ENCODE measurements at regions of chr17 and their contacts with region 1.

Region 1: DNA sequence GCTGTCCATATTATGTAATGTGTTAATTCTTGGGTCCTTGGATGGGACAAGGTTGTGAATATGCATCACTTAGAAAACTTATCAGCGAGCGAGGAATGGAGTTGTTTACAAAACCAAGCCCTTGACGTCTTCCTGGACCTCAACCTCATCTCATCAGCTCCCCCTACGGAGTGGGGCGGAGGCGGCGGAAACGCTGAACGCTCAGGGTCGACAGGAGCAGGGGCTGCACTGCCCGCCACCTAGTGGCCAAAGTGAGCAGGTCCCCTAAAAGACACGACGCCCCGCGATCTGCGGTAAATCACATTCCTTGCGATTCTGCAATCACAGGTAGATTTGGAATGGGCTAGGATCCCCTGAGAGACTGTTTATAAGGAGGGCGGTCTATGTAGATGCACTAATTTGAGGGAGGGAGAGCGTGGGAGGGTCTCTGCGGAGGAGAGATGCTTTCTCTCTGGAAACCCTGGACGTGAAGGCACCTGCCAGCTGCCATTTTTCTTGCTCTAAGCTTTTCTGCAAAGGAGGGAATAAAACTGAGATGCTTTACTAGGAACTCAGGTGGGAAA is 5.4 kb upstream of the ICAM2 start:
- DNase-seq: peak; percentile 95 to 97 (median 97)
- H3K4me3 ChIP-seq: peak overlapping the region in 6 of 7 experiments; percentile 4 to 77 (median 46)
- H3K27ac ChIP-seq: peak overlapping the region; percentile 65 to 99
- H3K4me1 ChIP-seq: peaks cover 9 to 52% (median 44%) of the 10 kb centered on the region in 4 experiments
- H3K27me3 ChIP-seq: no peaks in the 10 kb centered on the region

Region 2: DNA sequence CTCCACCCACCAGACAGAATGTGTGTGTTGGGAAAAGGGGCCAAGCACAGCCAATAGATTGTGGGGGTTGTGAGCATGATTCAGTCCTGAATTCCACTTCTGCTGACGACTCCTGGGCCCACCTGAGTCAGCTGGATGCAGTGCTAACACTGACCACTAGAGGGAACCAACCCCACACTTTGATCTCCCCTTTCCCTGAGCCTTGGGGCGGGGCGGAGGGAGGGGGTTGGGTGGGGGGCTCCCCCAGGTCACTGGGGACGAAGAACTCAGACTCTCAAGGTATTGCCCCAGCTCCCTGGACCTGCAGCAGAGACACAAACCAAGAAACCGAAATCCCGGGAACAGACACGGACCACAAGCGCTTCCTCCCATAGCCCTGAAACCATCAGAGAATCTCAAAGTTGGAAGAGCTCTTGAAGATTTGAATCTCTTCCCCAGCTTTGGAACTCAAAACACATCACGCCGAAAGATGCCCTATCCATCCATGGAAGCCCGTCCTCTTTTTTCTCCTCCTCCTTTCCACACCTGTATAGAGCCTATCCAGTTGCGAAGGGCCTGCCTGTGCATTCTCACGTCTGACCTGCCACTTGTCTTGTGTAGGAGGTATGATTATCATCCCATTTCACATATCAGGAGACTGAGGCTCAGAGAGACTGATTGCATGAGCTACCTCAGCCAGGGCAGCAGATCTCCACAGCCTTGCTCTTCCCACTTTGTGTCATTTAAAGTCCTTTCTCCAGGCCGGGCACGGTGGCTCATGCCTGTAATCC is 114.0 kb before region 1 on chr17:
- CTCF ChIA-PET with region 1: interaction called, 27 read pairs
- POLR2A ChIA-PET with region 1: no interaction called
- DNase-seq: peak in 2 of 3 donors; percentile 48 to 61
- H3K4me3 ChIP-seq: no peak overlapping the region
- H3K27ac ChIP-seq: no peak overlapping the region
- H3K4me1 ChIP-seq: no peaks in the 10 kb centered on the region
- H3K27me3 ChIP-seq: no peaks in the 10 kb centered on the region

Region 3: DNA sequence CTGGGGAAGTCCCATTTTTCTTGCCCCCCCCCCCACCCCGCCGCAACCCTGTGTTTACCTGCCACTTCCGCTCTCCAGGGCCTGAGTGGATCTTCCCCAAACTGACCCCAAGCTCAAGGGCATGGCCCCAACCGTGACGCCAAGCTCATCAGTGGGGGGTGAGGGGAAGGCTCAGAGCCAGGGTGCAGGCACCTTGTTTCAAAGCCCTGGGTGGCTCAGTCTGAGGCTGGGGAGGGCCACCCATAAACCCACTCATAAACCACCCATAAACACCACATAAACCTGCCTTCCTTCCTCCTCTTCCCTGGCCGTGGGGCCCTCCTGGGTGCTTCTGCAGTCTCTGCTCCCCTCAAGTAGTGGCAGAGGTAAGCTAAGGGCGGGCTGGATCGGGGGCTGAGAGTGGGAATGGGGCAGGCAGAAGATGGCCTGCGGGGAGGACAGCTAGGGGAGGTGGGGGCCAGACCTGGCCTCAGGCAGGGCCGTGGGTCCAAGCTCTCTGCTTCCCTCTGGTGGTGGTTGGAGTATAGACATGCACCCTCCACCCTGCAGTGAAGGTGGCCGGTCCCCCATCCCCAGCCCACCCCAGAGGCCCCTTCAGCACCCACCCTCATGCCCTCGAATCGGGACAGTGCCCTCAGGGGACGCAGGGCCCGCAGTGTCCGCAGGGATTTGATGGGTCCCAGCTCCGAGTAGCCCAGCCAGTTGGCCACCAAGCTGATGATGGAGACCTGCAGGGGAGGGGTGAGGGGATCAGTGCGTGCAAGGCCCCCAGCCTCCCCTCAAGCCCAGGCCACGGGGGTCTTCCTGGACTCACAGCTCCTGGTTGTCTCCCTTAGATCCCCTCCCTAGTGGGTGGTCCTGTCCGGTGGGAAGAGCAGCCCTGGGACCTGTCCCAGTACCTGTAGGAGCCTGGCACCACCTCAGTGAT is 79.1 kb before region 1 on chr17:
- CTCF ChIA-PET with region 1: interaction called, 23 read pairs
- POLR2A ChIA-PET with region 1: interaction called, 4 read pairs
- DNase-seq: peak; percentile 44 to 68 (median 63)
- H3K4me3 ChIP-seq: peak overlapping the region in 2 of 7 experiments; percentile 6 to 53
- H3K27ac ChIP-seq: no peak overlapping the region
- H3K4me1 ChIP-seq: peaks cover 0 to 37% (median 23%) of the 10 kb centered on the region in 4 experiments
- H3K27me3 ChIP-seq: no peaks in the 10 kb centered on the region

Region 4: GRCh38 chr17:63998050-63998720 is 27.6 kb before region 1 on chr17 and contains the start of gene PRR29:
- CTCF ChIA-PET with region 1: interaction called, 230 read pairs
- POLR2A ChIA-PET with region 1: interaction called, 7 read pairs
- DNase-seq: peak; percentile 65 to 73 (median 71)
- H3K4me3 ChIP-seq: peak within 1 kb of the TSS; percentile 54 to 90 (median 80)
- H3K27ac ChIP-seq: no peak within 1 kb of the TSS
- H3K4me1 ChIP-seq: peaks cover 0 to 35% (median 21%) of the 10 kb centered on the region in 4 experiments
- H3K27me3 ChIP-seq: no peaks in the 10 kb centered on the region

Region 5: DNA sequence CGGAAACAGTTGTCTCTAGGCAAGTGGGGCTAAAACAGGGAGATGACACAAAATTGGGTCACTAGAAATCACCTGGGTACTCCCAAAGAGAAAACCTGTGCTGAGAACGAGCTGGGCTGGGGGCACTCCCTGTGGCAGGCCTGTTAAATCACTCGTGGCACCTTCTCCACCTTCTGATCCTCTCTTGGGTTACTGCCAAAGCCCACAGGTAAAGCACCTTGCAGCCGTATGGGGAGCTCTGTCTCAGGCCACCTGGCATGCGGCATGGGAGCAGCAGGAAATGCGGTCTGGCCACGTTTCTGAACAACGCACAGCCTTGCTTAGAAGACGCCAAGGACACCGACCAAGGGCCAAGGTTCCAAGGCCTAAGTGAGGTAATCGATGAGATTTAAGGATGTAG is 16.1 kb after region 1 on chr17:
- CTCF ChIA-PET with region 1: interaction called, 30 read pairs
- POLR2A ChIA-PET with region 1: interaction called, 4 read pairs
- DNase-seq: no peak
- H3K4me3 ChIP-seq: no peak overlapping the region
- H3K27ac ChIP-seq: no peak overlapping the region
- H3K4me1 ChIP-seq: no peaks in the 10 kb centered on the region
- H3K27me3 ChIP-seq: no peaks in the 10 kb centered on the region

Region 6: GRCh38 chr17:64063766-64064224 is 38.0 kb after region 1 on chr17:
- CTCF ChIA-PET with region 1: interaction called, 41 read pairs
- POLR2A ChIA-PET with region 1: no interaction called
- DNase-seq: peak; percentile 70 to 84 (median 82)
- H3K4me3 ChIP-seq: peak overlapping the region in 2 of 7 experiments; percentile 15 to 43
- H3K27ac ChIP-seq: no peak overlapping the region
- H3K4me1 ChIP-seq: peaks cover 0 to 24% (median 12%) of the 10 kb centered on the region in 4 experiments
- H3K27me3 ChIP-seq: no peaks in the 10 kb centered on the region

Region 7: GRCh38 chr17:64103391-64104364 is 77.9 kb after region 1 on chr17:
- CTCF ChIA-PET with region 1: no interaction called
- POLR2A ChIA-PET with region 1: no interaction called
- DNase-seq: peak in 2 of 3 donors; percentile 52 to 65
- H3K4me3 ChIP-seq: no peak overlapping the region
- H3K27ac ChIP-seq: no peak overlapping the region
- H3K4me1 ChIP-seq: peaks cover 0 to 20% (median 10%) of the 10 kb centered on the region in 4 experiments
- H3K27me3 ChIP-seq: no peaks in the 10 kb centered on the region

Measured in common myeloid progenitor, CD34-positive (primary cell).